Caco-2 (cell line): ENCODE measurements at regions of chr1 and their contacts with region 1.

Region 1: GRCh38 chr1:33181921-33182341 is at the start of gene TRIM62:
- DNase-seq: peak; percentile 73 to 79
- H3K4me3 ChIP-seq: peak within 1 kb of the TSS; percentile 68
- H3K4me3 Mint-ChIP-seq: peak within 1 kb of the TSS; percentile 70
- H3K27ac Mint-ChIP-seq: peak within 1 kb of the TSS; percentile 37
- H3K4me1 ChIP-seq: peaks cover 2% of the 10 kb centered on the region; the same call in 1 of the 2 replicates
- H3K4me1 Mint-ChIP-seq: peaks cover 4% of the 10 kb centered on the region
- H3K27me3 ChIP-seq: no peaks in the 10 kb centered on the region
- H3K27me3 Mint-ChIP-seq: peaks cover 7% of the 10 kb centered on the region
- CTCF ChIP-seq: no peak
- total RNA-seq, gene TRIM62: 2.4 and 2.5 TPM in 2 replicates

Region 2: DNA sequence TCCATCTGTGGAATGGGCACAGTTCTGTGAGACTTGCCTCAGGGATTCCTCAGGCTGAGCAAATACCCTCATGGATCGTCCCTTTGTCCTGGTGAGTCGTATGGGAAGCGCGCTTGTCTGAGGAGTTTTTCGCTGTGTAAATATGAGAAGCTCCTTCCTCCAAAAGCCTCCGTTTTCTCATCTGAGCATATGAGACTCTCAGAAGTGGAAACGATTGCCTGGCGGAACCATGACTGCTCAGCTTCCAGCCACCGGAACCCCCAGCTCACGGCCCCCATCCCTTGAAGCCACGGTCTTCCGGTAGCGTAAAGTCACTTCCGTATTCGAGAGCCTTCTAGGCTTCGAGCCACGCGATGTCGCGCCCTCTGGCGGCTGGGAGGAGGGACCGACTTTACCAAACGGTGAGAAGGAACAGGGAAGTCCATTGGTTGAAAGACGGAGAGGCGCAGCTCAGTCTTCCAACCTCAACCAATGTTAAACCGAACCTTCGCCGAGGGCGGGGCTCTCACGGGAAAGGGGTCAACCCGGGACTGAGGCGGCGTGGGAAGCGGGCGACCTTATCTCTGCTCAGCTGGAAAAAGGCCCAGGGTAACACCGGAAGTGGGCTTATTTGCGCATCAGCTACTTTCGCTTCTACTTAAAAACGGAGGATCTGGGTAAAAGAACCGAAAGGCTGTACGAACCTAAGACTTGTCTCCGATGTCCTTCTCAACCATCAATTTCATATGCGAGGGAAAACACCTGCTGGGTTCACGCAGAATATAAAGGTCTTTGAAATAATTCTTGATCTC is 54.7 kb before region 1 on chr1:
- CTCF ChIA-PET with region 1: interaction called, 19 read pairs
- POLR2A ChIA-PET with region 1: interaction called, 17 read pairs
- intact Hi-C with region 1: loop called (anchors 2 kb)
- DNase-seq: peak; percentile 94 to 97
- H3K4me3 ChIP-seq: peak overlapping the region; percentile 77
- H3K4me3 Mint-ChIP-seq: peak overlapping the region; percentile 80
- H3K27ac Mint-ChIP-seq: peak overlapping the region; percentile 90
- H3K4me1 ChIP-seq: no peaks in the 10 kb centered on the region
- H3K4me1 Mint-ChIP-seq: peaks cover 6% of the 10 kb centered on the region
- H3K27me3 ChIP-seq: no peaks in the 10 kb centered on the region
- H3K27me3 Mint-ChIP-seq: no peaks in the 10 kb centered on the region
- CTCF ChIP-seq: peak; percentile 56 to 80

Region 3: DNA sequence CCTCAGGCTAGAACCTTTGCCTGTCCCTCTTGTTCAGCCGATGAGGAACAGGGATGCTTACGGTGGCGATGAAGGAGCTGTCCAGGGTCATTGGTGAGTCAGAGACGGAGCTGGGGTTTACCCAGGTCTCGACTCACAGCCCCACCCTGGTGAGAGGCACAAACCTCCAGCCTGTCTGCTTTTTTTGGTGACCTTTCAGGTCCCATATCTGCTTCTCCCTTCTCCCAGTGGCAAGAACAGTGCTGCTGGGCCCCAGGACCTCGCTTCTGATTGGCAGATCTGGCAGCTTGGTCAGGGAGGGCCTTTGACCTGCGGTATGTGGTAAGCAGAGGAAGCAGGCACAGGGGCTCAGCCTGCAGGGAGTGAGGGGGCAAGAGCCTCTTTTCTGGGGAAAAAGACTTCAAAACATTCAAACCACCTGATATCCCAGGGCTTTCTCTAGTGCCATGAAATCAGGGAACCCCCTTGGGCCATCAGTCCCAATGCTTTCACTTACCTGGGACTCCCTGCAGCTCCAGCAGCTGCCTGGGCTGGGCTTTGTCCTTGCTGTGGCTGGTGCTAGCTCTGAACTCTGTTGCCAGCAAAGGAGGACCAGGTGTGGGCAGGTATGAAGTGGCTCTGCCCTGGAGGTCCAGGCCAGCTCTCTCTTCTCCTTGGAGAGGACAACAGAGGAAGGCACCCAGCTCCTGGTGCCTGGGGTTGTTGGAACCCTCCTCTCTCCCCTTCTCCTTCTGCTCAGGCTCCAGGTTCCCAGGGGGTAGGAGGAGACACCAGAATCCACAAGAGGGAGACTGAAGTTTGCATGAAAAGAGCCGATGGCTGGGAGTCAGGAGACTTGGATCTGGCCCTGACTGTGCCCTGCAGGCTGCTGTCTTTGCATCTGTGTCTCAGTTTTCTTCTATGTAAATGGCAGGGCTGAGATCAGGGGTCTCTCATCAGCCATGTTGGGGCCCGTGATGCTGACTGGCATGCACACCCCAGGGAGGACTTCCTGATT is 41.5 kb before region 1 on chr1:
- CTCF ChIA-PET with region 1: no interaction called
- POLR2A ChIA-PET with region 1: no interaction called
- intact Hi-C with region 1: loop called (anchors 5 kb)
- DNase-seq: no peak
- H3K4me3 ChIP-seq: no peak overlapping the region
- H3K4me3 Mint-ChIP-seq: no peak overlapping the region
- H3K27ac Mint-ChIP-seq: no peak overlapping the region
- H3K4me1 ChIP-seq: no peaks in the 10 kb centered on the region
- H3K4me1 Mint-ChIP-seq: no peaks in the 10 kb centered on the region
- H3K27me3 ChIP-seq: no peaks in the 10 kb centered on the region
- H3K27me3 Mint-ChIP-seq: no peaks in the 10 kb centered on the region
- CTCF ChIP-seq: peak in 1 of 2 experiments; percentile 6